ENCODE measurements at regions of chr5 and their contacts with region 1.

Region 1: DNA sequence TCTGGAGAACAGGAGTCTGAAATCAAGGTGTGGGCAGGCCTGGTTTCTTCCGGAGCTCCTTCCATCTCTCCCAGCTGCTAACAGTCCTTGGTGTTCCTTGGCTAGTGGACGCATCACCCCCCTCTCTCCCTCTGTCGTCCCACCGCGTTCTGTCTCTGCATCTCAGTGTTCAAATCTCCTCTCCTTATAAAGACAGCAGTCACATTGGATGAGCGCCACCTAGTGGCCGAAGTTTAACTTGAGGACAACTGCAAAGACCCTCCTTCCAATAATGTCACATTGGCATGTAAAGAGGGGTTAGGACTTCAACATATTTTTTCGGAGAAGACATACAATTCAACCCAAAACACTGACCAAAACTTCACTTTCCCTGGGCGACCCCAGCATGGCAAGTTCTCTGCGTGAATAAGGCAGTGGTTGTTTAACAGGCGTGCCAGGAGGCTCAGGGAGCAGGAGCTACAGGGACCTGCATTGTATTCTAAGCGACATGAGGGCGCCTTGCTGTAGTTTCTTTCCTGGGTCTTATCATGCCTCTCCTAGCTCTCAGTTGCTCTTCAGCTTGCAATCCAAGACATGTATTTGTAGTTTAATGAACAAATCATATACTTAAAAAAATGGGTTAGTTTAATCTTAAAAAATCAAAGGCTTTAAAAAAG is 27.9 kb upstream of the BASP1 start:
- DNase-seq: peak; percentile 61 to 62
- H3K4me3 ChIP-seq: no peak overlapping the region
- H3K27ac ChIP-seq: no peak overlapping the region
- H3K4me1 ChIP-seq: no peaks in the 10 kb centered on the region
- H3K27me3 ChIP-seq: no peaks in the 10 kb centered on the region
- CTCF ChIP-seq: peak; percentile 59 to 78 (median 66)
- POLR2A ChIP-seq: no peak

Region 2: GRCh38 chr5:16791036-16791705 is 398.3 kb before region 1 on chr5:
- intact Hi-C with region 1: loop called (anchors 5 kb)
- DNase-seq: peak in 1 of 2 donors; percentile 29
- H3K4me3 ChIP-seq: no peak overlapping the region
- H3K27ac ChIP-seq: no peak overlapping the region
- H3K4me1 ChIP-seq: no peaks in the 10 kb centered on the region
- H3K27me3 ChIP-seq: no peaks in the 10 kb centered on the region
- CTCF ChIP-seq: peak; percentile 55 to 84 (median 76)
- POLR2A ChIP-seq: no peak

Region 3: GRCh38 chr5:17463653-17464052 is 274.1 kb after region 1 on chr5:
- intact Hi-C with region 1: no loop called
- DNase-seq: no peak
- H3K4me3 ChIP-seq: no peak overlapping the region
- H3K27ac ChIP-seq: no peak overlapping the region
- H3K4me1 ChIP-seq: no peaks in the 10 kb centered on the region
- H3K27me3 ChIP-seq: no peaks in the 10 kb centered on the region
- CTCF ChIP-seq: no peak
- POLR2A ChIP-seq: no peak